HCT116 (cell line): ENCODE measurements at regions of chr6 and their contacts with region 1.

Region 1: GRCh38 chr6:5398530-5398929 is 137.2 kb downstream of the FARS2 start:
- DNase-seq: peak; percentile 43
- ATAC-seq: peak; percentile 92
- H3K4me3 ChIP-seq: no peak overlapping the region
- H3K27ac ChIP-seq: no peak overlapping the region
- H3K4me1 ChIP-seq: no peaks in the 10 kb centered on the region
- H3K27me3 ChIP-seq: no peaks in the 10 kb centered on the region
- CTCF ChIP-seq: peak; percentile 49 to 60 (median 49); a peak in 5 of 6 replicates
- POLR2A ChIP-seq: no peak
- RAD21 ChIP-seq: peak; percentile 56

Region 2: DNA sequence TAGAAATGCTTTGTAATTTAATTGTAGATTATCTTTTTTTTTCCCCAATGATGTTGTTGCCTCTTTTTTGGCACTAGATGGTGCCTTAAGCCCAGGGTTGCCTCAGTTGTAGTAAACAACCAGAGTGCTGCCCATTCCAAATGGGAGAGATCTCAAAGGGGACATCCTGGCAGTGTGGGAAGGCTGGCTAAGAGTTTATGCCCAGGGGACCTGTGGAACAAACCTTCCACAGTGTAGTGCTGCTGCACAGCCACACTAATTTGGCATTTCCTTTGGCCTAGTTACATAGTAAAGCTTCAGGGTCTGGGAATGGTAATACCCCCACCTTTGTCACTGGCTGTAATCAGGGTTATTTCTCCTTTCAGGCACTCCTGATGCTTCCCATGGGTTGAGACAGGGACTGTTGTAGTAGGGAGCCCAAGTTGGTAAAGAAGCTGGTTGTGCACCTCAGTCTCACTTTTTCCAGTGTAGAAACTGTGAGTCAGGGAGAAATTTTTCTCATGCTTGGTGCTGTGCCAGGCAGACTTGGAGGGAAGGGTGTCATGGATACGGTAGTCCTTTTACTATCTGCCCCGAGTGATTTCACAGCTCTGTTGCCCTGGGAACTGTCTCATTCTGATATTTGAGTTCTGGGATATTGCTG is 1085.4 kb before region 1 on chr6:
- CTCF ChIA-PET with region 1: no interaction called
- POLR2A ChIA-PET with region 1: no interaction called
- RAD21 ChIA-PET with region 1: no interaction called
- intact Hi-C with region 1: loop called (anchors 1 kb)
- DNase-seq: peak; percentile 49
- ATAC-seq: peak; percentile 90
- H3K4me3 ChIP-seq: peak overlapping the region in 1 of 2 experiments; percentile 14; a peak in 1 of 4 replicates
- H3K27ac ChIP-seq: no peak overlapping the region
- H3K4me1 ChIP-seq: peaks cover 2 to 17% of the 10 kb centered on the region in 2 experiments; a peak in 3 of 4 replicates
- H3K27me3 ChIP-seq: no peaks in the 10 kb centered on the region
- CTCF ChIP-seq: peak; percentile 47 to 80 (median 63); a peak in 5 of 6 replicates
- POLR2A ChIP-seq: no peak
- RAD21 ChIP-seq: peak; percentile 97

Region 3: DNA sequence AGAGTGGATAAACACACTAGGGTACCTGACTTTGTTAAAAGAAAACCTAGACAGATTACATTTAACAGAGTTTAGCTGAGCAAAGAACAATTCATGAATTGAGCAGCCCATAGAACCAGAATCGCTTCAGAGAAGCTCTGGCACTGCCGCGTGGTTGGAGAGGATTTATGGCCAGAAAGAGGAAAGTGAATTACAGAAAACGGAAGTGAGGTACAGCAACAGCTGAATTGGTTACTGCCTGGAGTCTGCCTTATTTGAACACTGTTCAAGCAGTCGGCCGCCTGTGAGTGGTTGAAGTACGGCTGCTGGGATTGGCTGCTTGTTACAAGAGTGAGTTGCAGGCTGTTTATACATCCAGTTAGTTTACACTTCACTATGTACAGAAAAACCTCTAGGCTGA is 876.1 kb before region 1 on chr6:
- CTCF ChIA-PET with region 1: no interaction called
- POLR2A ChIA-PET with region 1: no interaction called
- RAD21 ChIA-PET with region 1: no interaction called
- intact Hi-C with region 1: no loop called
- DNase-seq: no peak
- ATAC-seq: no peak
- H3K4me3 ChIP-seq: no peak overlapping the region
- H3K27ac ChIP-seq: no peak overlapping the region
- H3K4me1 ChIP-seq: no peaks in the 10 kb centered on the region
- H3K27me3 ChIP-seq: no peaks in the 10 kb centered on the region
- CTCF ChIP-seq: no peak
- POLR2A ChIP-seq: no peak
- RAD21 ChIP-seq: no peak

Region 4: GRCh38 chr6:5058254-5058653 is 340.3 kb before region 1 on chr6:
- CTCF ChIA-PET with region 1: interaction called, 5 read pairs
- POLR2A ChIA-PET with region 1: no interaction called
- RAD21 ChIA-PET with region 1: no interaction called
- intact Hi-C with region 1: loop called (anchors 5 kb)
- DNase-seq: no peak
- ATAC-seq: no peak
- H3K4me3 ChIP-seq: no peak overlapping the region
- H3K27ac ChIP-seq: no peak overlapping the region
- H3K4me1 ChIP-seq: no peaks in the 10 kb centered on the region
- H3K27me3 ChIP-seq: no peaks in the 10 kb centered on the region
- CTCF ChIP-seq: no peak
- POLR2A ChIP-seq: no peak
- RAD21 ChIP-seq: no peak

Region 5: DNA sequence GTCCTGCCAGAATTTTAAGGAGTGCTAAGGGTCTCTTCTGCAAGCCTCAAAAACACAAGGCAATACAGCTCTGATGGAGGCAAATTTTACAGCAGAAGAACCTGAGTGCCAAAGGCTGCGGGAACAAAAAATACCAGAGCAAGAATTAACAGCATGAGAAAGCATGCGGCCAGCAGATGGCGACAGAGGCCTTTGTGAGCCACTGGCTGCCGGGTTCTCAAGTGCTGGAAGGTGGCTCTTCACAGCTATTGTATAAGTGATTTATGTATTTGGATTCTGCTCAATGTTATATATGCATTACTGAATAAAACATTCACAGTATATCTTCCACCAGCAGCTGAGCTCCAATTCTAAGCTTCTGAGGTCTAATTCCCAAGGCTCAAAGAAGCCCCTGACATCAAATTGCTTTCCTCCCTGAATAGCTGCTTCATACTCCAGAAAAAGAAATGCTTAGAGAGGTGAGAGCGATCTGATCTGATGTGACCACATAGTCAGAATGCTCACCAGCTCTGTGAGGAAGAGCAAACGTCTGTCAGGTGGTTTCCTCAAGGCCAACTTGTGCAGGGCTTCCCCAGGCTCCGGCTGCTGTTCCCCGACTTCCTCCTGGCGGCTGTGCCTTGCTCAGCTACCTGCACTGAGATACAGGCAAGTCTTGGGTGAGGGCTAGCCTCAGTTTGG is 254.8 kb before region 1 on chr6:
- CTCF ChIA-PET with region 1: interaction called, 26 read pairs
- POLR2A ChIA-PET with region 1: no interaction called
- RAD21 ChIA-PET with region 1: interaction called in 1 of 2 experiments, 3 read pairs
- intact Hi-C with region 1: loop called (anchors 1 kb)
- DNase-seq: peak; percentile 46
- ATAC-seq: peak; percentile 83
- H3K4me3 ChIP-seq: no peak overlapping the region
- H3K27ac ChIP-seq: no peak overlapping the region
- H3K4me1 ChIP-seq: no peaks in the 10 kb centered on the region
- H3K27me3 ChIP-seq: no peaks in the 10 kb centered on the region
- CTCF ChIP-seq: peak; percentile 73 to 96 (median 85)
- POLR2A ChIP-seq: no peak
- RAD21 ChIP-seq: peak; percentile 91

Region 6: DNA sequence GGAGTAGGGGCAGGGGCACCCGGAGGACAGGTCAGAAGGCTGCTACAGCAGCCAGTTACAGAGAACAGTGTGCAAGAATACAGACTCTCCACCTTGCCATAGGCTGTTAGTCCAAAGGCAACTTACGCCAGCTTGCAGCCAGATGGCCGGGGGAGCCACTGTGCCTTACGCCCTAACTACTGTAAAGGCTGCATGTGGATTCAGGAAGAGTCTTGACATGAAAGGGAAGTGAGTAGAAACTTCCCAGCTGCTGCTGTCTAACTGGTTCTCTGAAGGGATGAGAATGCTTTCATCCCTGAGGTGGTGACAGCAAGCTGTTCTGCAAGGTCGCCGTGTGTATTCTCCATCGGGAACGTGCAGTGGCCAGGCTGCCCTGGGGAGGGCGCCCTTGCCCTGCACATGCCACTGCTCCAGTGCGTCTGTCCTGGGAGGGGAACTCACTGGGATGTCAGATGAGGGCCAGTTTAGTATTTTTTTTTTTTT is 183.9 kb before region 1 on chr6:
- CTCF ChIA-PET with region 1: interaction called, 4 read pairs
- POLR2A ChIA-PET with region 1: no interaction called
- RAD21 ChIA-PET with region 1: no interaction called
- intact Hi-C with region 1: loop called (anchors 1 kb)
- DNase-seq: peak; percentile 4
- ATAC-seq: peak; percentile 98
- H3K4me3 ChIP-seq: no peak overlapping the region
- H3K27ac ChIP-seq: no peak overlapping the region
- H3K4me1 ChIP-seq: no peaks in the 10 kb centered on the region
- H3K27me3 ChIP-seq: no peaks in the 10 kb centered on the region
- CTCF ChIP-seq: peak; percentile 75 to 85 (median 83)
- POLR2A ChIP-seq: no peak
- RAD21 ChIP-seq: peak; percentile 85

Region 7: GRCh38 chr6:6008648-6009421 is 610.3 kb after region 1 on chr6:
- CTCF ChIA-PET with region 1: no interaction called
- POLR2A ChIA-PET with region 1: no interaction called
- RAD21 ChIA-PET with region 1: no interaction called
- intact Hi-C with region 1: no loop called
- DNase-seq: peak; percentile 36
- ATAC-seq: peak; percentile 95
- H3K4me3 ChIP-seq: peak overlapping the region; percentile 48 to 61
- H3K27ac ChIP-seq: peak overlapping the region; percentile 28; the same call in 1 of the 2 replicates
- H3K4me1 ChIP-seq: peaks cover 5 to 15% of the 10 kb centered on the region in 2 experiments; a peak in 2 of 4 replicates
- H3K27me3 ChIP-seq: peaks cover 16% of the 10 kb centered on the region; the same call in 1 of the 2 replicates
- CTCF ChIP-seq: no peak
- POLR2A ChIP-seq: no peak
- RAD21 ChIP-seq: no peak